KBM-7 (cell line): ENCODE measurements at regions of chr2 and their contacts with region 1.

Region 1: DNA sequence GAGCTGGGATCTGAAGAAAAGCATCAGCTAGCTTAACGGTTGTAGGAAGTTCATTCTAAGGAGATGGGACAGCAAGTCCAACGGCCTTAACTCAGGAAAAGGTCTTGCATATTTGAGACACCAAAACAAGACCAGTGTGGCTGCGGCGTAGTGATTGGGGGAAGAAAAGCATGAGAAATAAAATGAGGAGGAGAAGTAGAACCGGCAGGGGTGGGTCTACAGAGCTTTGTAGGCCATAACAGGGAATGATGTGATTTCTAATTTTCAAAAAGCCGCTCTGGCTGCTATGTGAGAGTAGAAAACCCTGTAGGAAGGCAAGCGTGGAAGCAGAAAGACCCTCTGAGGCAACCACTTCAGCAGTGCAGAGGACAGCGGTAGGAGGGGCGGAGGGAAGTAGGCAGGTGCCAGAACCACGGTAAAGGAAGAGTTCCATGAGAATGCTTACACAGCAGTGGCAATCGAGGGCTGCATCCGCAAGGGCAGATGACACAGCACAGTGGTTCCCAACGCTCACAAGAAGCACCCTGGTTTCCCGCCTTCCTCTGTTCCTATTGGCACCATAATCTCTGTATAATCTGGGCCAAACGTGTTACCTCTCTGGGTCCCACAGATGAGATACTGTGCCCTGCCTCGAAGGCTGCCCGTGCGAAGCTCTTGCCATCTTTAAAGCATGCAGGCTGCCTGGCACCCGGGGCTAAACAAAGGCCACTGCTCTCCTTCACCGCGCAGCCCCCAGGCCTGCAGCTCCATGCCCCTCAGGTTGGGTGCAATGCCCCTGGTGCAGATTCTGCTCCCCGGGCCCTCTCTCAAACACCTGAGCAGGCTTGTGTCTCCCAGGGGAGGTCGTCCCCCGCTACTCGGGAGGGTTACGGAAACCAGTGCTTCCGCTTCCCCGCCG is 791 bp downstream of the ANKRD39 start:
- DNase-seq: peak; percentile 43

Region 2: DNA sequence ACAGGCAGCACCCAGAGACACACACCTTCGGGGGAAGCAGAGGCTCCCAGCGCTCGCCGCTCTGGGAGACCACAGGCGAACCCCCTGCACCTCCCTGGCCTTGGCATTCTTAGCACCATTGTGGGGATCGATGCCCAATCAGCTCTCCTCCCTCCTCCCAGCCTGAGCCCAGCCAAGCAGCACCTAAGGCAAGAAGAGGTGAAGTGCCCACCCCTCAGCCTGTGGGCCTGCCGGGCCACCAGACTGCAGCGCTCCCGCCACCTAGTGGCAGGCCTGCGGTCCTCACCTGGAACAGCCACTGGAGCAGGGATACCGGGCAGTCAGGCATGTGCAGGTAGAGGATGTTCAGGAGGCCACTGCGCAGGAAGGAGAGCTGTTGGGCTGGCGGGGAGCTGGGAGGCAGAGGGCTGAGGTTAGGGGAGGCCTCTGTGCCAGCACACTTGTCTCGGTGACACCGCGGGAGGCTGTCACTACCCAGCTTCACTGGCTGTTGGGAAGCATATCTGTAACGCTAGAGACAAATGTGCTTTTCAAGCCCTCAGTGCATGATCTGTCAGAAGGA is 94.1 kb after region 1 on chr2:
- in situ Hi-C with region 1: loop called (anchors 10 kb)
- DNase-seq: peak; percentile 66